Psoas muscle (tissue), 8 donors: ENCODE measurements at regions of chr16 and their contacts with region 1.

Region 1: DNA sequence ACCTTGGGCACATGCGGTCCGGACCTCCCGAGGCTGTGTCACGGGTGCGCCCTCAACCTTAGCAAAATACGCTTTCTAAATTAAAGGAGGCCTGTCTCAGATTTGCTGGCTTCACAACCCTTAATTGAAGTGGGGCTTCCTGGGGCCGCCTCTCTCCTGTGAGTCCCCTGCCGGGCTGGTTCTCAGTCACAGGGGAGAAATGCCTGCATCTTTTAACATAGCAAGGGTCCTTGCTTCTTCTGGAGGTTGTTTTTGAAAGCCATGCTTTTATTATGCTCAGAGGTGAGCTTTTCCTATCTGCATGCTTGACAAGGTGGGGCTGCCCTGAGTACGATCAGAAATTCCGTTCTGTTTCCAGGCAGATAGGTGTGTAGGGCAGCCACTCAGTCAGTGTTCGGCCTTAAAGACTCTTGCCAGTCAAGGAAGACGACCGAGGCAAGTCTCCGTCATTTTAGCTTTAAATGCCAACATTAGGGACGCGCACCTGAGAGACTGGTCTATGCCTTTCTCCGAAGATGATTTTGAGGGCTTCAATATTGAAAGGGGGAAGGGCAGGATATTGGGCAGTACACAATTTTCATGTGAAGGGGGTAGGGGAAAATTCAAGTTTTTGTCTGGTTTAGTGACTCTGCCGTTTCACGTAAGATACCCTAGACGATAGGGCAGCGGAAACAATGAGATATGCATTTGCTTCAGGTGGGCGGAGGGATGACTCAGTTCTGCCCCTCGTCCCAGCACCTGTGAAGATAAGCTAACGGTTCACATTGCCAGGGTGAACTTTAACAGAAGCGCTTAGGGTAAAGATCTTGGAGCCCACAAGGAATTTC is 5.5 kb upstream of the SLC7A5 start:
- DNase-seq: no peak
- ATAC-seq: no peak
- H3K4me3 ChIP-seq: no peak overlapping the region
- H3K27ac ChIP-seq: no peak overlapping the region
- H3K4me1 ChIP-seq: no peaks in the 10 kb centered on the region
- H3K27me3 ChIP-seq: peaks cover 0 to 8% (median 5%) of the 10 kb centered on the region in 3 donors
- CTCF ChIP-seq: no peak

Region 2: GRCh38 chr16:87778830-87779579 is 95.8 kb before region 1 on chr16:
- intact Hi-C with region 1: loop called (anchors 1 to 2 kb)
- DNase-seq: peak; percentile 91 to 95
- ATAC-seq: peak; percentile 91 to 93 (median 92)
- H3K4me3 ChIP-seq: no peak overlapping the region
- H3K27ac ChIP-seq: no peak overlapping the region
- H3K4me1 ChIP-seq: peaks cover 15% of the 10 kb centered on the region
- H3K27me3 ChIP-seq: no peaks in the 10 kb centered on the region
- CTCF ChIP-seq: peak; percentile 100

Region 3: GRCh38 chr16:87930456-87930855 is 55.6 kb after region 1 on chr16:
- intact Hi-C with region 1: no loop called
- DNase-seq: no peak
- ATAC-seq: no peak
- H3K4me3 ChIP-seq: no peak overlapping the region
- H3K27ac ChIP-seq: no peak overlapping the region
- H3K4me1 ChIP-seq: no peaks in the 10 kb centered on the region
- H3K27me3 ChIP-seq: peaks cover 0 to 3% (median 0%) of the 10 kb centered on the region in 3 donors
- CTCF ChIP-seq: no peak